CD8-positive, alpha-beta T cell (primary cell): ENCODE measurements at regions of chr6 and their contacts with region 1.

Region 1: DNA sequence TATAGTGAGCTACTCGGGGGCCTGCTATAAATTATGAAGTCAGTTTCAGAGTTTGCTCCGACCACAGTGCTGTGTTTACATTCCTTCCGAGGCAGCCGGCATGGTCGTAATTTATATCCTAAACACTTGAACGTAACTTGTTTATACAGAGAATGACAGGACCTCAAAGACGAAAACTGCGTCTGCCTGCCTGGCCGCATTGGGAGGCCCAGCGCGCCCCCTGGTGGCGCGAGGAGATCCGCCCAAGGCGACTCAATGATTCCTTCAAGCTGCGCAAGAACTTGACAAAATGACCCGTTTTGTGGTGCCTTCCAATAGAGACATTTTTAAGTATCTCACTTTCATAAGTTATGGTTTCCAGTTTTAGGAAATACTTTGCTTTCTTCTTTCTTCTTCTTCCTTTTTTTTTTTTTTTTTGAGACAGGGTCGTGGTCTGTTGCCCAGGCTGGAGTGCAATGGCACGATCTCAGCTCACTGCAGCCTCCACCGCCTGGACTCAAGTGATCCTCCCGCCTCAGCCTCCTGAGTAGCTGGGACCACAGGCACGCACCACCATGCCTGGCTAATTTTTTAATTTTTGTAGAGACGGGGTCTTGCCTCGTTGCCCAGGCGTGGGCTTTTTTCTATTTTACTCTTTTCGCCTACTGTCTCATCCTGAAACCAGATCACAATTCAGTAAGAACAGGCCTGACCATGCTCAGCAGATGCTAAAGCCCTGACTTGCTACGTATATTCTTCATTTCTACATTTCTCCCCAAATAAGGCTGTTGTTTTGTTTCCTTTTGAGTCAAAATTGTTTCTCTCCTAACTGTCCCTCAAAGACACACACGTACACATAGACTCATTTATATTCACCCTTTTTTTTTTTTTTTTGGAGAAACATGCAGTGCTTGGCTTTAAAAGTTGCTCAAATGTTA is 7.8 kb downstream of the FOXF2 start:
- DNase-seq: peak; percentile 38 to 82 (median 66)
- ATAC-seq: peak; percentile 61
- H3K4me3 ChIP-seq: no peak overlapping the region
- H3K4me3 Mint-ChIP-seq: no peak overlapping the region
- H3K27ac ChIP-seq: no peak overlapping the region
- H3K27ac Mint-ChIP-seq: no peak overlapping the region
- H3K4me1 ChIP-seq: peaks cover 3% of the 10 kb centered on the region
- H3K4me1 Mint-ChIP-seq: peaks cover 5% of the 10 kb centered on the region
- H3K27me3 ChIP-seq: peaks cover 5 to 13% of the 10 kb centered on the region in 2 experiments
- H3K27me3 Mint-ChIP-seq: peaks cover 52% of the 10 kb centered on the region
- CTCF ChIP-seq: peak; percentile 86

Region 2: GRCh38 chr6:1426416-1426815 is 29.2 kb after region 1 on chr6:
- CTCF ChIA-PET with region 1: interaction called, 12 read pairs
- POLR2A ChIA-PET with region 1: no interaction called
- intact Hi-C with region 1: no loop called
- DNase-seq: no peak
- ATAC-seq: no peak
- H3K4me3 ChIP-seq: no peak overlapping the region
- H3K4me3 Mint-ChIP-seq: no peak overlapping the region
- H3K27ac ChIP-seq: no peak overlapping the region
- H3K27ac Mint-ChIP-seq: no peak overlapping the region
- H3K4me1 ChIP-seq: no peaks in the 10 kb centered on the region
- H3K4me1 Mint-ChIP-seq: peaks cover 3% of the 10 kb centered on the region
- H3K27me3 ChIP-seq: peaks cover 0 to 5% of the 10 kb centered on the region in 2 experiments
- H3K27me3 Mint-ChIP-seq: peaks cover 30% of the 10 kb centered on the region
- CTCF ChIP-seq: no peak

Region 3: DNA sequence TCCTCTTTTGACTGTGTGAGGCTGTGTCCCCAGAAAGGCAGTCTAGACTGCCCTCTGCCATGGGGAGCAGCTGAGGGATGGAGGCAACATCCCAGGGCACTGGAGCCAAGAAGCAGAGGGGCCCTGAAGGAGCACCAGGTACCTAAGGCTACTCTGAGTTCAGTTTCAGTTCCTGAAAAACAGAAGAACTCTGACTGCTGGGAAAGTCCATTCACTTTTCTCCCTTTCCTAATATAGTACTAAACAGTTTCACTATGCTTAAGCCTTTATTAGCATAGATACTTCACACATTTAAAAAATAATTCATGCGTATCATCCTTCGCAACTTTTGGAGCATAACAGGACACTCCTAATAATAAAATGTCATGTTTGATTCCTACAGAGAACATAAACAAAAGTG is 342.5 kb after region 1 on chr6:
- CTCF ChIA-PET with region 1: no interaction called
- POLR2A ChIA-PET with region 1: no interaction called
- intact Hi-C with region 1: no loop called
- DNase-seq: no peak
- ATAC-seq: no peak
- H3K4me3 ChIP-seq: no peak overlapping the region
- H3K4me3 Mint-ChIP-seq: no peak overlapping the region
- H3K27ac ChIP-seq: no peak overlapping the region
- H3K27ac Mint-ChIP-seq: no peak overlapping the region
- H3K4me1 ChIP-seq: no peaks in the 10 kb centered on the region
- H3K4me1 Mint-ChIP-seq: no peaks in the 10 kb centered on the region
- H3K27me3 ChIP-seq: no peaks in the 10 kb centered on the region
- H3K27me3 Mint-ChIP-seq: no peaks in the 10 kb centered on the region
- CTCF ChIP-seq: no peak